SK-N-SH (cell line): ENCODE measurements at regions of chr7 and their contacts with region 1.

Region 1: GRCh38 chr7:51430480-51431086 is 114.0 kb upstream of the COBL start:
- DNase-seq: peak; percentile 79
- H3K4me3 ChIP-seq: no peak overlapping the region
- H3K27ac ChIP-seq: no peak overlapping the region
- H3K4me1 ChIP-seq: no peaks in the 10 kb centered on the region
- H3K27me3 ChIP-seq: no peaks in the 10 kb centered on the region
- CTCF ChIP-seq: peak; percentile 77
- EP300 ChIP-seq: no peak
- RAD21 ChIP-seq: peak; percentile 96

Region 2: GRCh38 chr7:51111241-51111940 is 319.2 kb before region 1 on chr7:
- CTCF ChIA-PET with region 1: no interaction called
- POLR2A ChIA-PET with region 1: no interaction called
- DNase-seq: no peak
- H3K4me3 ChIP-seq: no peak overlapping the region
- H3K27ac ChIP-seq: no peak overlapping the region
- H3K4me1 ChIP-seq: no peaks in the 10 kb centered on the region
- H3K27me3 ChIP-seq: peaks cover 38% of the 10 kb centered on the region; the same call in 1 of the 2 replicates
- CTCF ChIP-seq: no peak
- EP300 ChIP-seq: no peak
- RAD21 ChIP-seq: no peak

Region 3: GRCh38 chr7:51444936-51445335 is 14.4 kb after region 1 on chr7:
- CTCF ChIA-PET with region 1: interaction called, 42 read pairs
- POLR2A ChIA-PET with region 1: no interaction called
- DNase-seq: no peak
- H3K4me3 ChIP-seq: no peak overlapping the region
- H3K27ac ChIP-seq: no peak overlapping the region
- H3K4me1 ChIP-seq: no peaks in the 10 kb centered on the region; a peak in 1 of 4 replicates
- H3K27me3 ChIP-seq: no peaks in the 10 kb centered on the region
- CTCF ChIP-seq: no peak
- EP300 ChIP-seq: no peak
- RAD21 ChIP-seq: no peak

Region 4: GRCh38 chr7:51455948-51456347 is 25.4 kb after region 1 on chr7:
- CTCF ChIA-PET with region 1: interaction called, 48 read pairs
- POLR2A ChIA-PET with region 1: no interaction called
- DNase-seq: peak; percentile 79
- H3K4me3 ChIP-seq: no peak overlapping the region
- H3K27ac ChIP-seq: no peak overlapping the region
- H3K4me1 ChIP-seq: peaks cover 0 to 11% of the 10 kb centered on the region in 2 experiments; a peak in 2 of 4 replicates
- H3K27me3 ChIP-seq: no peaks in the 10 kb centered on the region
- CTCF ChIP-seq: no peak
- EP300 ChIP-seq: peak in 1 of 2 experiments; percentile 71; a peak in 2 of 4 replicates
- RAD21 ChIP-seq: no peak

Region 5: DNA sequence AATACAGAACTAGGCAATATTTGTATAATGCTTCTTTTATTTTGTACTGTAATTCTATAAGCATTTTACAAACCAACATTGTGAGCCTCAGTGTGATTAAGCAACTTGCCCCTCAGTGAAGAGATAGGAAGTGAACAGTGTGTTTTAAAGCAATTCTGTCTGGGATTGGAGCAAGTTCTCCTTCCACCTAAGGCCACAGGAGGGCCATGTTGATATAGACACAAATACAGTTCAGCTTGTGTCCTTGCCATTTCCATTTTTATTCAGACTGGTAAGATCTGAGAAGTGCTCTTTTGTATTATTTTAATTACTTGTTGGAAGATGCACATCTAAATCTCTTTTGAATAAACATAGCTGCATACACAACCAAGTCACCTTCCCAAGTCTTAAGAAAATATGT is 302.4 kb after region 1 on chr7:
- CTCF ChIA-PET with region 1: interaction called, 15 read pairs
- POLR2A ChIA-PET with region 1: no interaction called
- DNase-seq: peak; percentile 3
- H3K4me3 ChIP-seq: no peak overlapping the region
- H3K27ac ChIP-seq: no peak overlapping the region
- H3K4me1 ChIP-seq: peaks cover 0 to 2% of the 10 kb centered on the region in 2 experiments; a peak in 1 of 4 replicates
- H3K27me3 ChIP-seq: no peaks in the 10 kb centered on the region
- CTCF ChIP-seq: no peak
- EP300 ChIP-seq: no peak
- RAD21 ChIP-seq: peak; percentile 31; the same call in 1 of the 2 replicates